Right ventricle myocardium superior (tissue), 1 donor: ENCODE measurements at regions of chr3 and their contacts with region 1.

Region 1: GRCh38 chr3:11803977-11804892 is 42.5 kb downstream of the TAMM41 start:
- DNase-seq: peak; percentile 47
- ATAC-seq: peak; percentile 78

Region 2: GRCh38 chr3:11662402-11662990 is 141.7 kb before region 1 on chr3:
- intact Hi-C with region 1: loop called (anchors 5 kb)
- DNase-seq: no peak
- ATAC-seq: no peak

Region 3: GRCh38 chr3:11735638-11736037 is 68.6 kb before region 1 on chr3:
- intact Hi-C with region 1: no loop called
- DNase-seq: no peak
- ATAC-seq: no peak